ENCODE measurements at regions of chr11 and their contacts with region 1.

Region 1: DNA sequence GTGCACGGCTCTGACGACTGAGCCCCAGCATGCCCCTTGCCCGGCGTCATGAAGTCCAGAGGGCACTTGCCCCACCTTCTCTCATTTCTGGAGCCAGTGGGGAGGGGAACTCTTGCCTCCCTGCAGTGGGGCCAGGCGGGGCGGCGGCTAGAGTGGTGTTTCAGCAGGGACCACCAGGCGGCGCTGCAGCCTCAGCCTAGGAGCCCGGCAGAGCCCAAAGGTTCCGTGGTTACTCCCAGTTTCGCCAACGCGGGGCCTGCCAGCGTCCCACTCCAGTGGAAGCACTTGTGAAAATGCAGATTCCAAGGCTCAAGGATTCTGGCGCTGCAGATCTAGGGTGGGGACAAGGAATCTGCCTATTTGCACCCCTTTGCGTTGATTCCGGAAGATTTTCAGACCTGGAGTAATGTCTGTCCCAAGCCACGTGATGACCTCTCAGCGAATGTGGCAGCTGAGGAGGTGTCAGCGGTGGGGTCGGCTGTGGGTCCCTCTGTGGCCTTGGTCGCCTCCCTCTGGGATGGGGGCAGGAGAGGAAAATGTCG is 55.7 kb downstream of the CD82 start:
- DNase-seq: peak; percentile 94

Region 2: DNA sequence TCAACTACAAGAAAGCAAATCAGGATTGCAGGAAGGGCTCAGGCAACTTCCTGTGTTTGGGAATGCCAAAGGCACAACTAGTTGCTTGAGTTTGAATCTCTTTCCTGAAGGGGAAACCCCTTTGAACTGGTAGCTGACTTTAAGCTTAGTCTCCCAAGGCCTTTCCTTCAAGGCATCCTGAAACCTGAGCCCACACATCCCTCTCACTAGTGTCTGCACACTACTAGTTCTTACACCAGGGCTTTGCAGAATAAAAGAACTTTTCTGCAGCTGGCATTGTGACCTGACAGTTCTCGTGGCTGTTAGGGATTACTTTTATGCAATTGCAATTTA is 430.4 kb before region 1 on chr11:
- intact Hi-C with region 1: no loop called
- DNase-seq: no peak

Region 3: DNA sequence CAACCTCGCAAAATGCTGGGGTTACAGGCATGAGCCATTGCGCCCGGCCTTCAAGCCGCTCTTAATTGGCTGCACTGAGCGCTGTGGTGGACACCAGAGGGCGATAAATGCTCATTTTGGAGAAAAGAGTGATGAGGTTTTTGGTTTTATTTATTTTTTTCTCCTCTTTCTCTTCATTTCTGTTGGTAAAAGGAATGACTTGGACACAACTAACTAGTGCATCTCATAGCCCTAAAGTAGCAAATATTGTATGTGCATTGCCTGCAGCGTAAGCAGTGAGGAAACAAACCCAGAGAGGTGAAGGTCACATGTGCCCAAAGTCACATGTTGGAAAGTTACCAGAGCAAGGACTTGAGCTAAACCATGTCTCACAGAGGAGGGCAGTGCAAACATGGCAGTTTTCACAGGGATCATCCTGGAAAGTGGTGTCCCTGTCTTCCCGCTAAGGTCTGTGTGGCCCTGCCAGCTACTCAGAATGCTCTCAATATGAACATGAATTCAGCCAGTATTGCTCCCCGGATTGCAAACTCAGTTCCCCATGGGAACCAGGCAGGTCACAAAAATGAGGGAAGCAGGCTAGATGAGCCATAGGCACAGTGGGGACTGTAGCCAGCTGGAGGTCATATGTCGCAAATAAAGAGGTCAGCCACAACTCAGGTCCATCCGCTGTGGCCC is 64.3 kb before region 1 on chr11:
- intact Hi-C with region 1: loop called (anchors 2 kb)
- DNase-seq: no peak

Region 4: DNA sequence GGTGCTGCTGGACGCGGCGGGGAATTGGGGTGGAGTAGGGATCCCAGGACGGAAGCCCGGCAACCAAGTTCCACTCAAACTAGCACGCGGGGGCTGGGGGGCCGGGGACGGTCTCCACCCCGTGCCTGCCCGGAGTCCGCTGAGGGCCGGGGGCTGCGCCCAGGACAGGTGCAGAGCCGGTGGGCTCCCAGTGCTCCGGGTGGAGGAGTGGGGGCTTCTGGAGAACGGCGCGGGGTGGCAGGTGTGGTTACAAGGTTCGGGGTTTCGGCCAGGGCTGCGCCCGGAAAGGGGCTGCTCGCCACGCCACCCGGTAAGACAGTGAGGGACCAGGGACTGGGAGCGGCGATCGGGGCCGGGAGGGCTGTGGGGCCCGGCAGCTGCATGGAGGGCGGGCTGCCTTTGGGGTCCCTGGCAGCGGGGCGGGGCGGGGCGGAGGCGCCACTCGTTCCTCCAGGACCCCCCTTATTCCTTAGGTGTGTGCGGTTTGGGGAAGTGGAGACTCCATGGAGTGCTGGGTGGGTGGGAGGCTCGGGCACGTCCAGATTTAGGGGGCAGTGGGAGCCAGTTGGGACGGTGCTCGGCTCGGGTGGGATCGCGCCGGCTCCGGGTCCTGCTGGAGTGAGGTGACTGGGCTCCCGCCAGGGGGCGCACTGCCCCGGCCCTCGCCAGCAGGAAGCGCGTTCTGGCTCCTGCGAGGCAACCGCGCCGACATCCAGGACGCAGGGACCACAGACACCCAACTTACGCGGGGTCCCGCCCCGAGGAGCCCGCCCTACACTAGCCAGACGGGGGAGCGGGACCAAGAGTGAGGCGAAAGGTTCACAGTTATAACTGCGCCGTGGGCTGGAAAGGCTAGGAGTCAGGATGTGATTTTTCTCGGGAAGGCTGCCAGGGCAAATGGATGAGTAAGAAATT is 106.4 kb after region 1 on chr11:
- intact Hi-C with region 1: loop called (anchors 5 to 10 kb)
- DNase-seq: peak; percentile 93

Region 5: GRCh38 chr11:44893846-44894617 is 272.8 kb after region 1 on chr11:
- intact Hi-C with region 1: loop called in 1 of 2 experiments (anchors 2 kb)
- DNase-seq: peak; percentile 90

Region 6: DNA sequence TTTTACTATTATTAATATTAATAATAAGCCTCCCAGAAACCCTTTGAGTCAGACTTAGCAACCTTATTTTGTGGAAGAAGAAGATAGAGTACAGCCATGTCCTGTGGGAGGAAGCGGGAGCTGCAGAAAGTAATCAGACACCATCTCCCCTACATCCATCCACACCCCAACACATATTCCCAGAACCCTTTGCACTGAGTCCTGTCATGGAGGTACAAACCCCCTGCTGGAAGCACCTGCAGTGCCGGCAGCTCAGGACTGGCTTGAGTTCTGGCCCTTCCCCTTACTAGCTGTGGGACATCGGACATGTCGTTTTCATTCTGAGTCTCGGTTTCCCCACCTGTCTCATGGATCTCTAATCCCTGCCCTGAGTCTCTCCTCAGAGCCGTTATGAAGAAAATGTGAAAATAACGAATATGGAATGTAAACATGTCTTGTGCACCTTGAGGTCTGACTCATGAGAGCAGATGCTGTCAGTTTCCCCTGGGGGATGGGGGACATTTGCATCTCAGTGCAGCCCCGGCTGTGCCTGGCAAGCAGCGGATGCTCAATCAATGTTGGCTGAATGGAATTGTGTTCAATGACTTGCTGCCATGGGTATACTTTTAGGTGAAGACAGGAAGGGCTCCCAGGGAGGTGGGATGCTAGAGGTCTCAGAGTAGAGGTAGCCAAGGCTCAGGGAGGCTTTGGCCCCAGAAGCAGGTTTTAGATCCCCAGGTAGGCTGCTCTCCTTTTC is 284.1 kb after region 1 on chr11:
- intact Hi-C with region 1: loop called (anchors 2 to 5 kb)
- DNase-seq: no peak

Region 7: DNA sequence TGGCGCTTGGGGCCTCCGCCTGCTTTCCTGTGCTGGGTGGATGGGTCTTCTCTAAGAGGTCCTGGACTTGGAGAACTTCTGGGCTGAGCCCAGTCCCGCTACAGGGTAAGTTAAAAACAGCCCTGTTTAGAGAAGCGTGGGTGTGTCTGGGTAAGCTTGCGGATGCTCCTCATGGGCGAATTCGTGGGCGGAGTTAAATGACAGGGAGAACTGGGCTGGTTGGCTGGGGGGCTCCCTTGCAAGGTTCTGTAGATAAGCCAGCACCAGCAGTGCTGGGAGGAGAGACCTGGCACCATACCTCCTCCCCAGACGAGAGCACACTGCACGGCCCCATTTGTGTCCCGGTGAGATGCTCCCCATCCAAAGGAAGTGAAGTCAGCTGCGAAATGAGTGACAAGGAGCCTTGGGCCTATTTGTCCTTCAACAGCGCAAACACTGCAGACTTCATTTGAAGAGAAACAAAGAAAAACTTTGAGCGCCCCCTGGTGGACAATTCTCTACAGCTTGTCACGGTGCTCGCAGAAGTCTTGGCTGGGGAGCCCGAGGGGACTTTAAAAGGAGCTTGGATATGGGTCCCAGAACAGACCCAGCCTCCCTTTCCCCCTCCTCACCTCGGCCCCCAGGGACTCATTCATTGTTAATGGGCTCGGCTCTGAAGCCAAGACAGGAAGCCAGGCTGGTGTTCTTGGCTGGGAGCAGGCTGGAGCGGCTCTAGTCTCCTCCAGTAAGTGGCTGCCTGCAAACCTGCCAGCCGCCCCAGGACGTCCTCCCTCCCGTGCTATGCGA is 290.0 kb after region 1 on chr11:
- intact Hi-C with region 1: loop called (anchors 2 to 5 kb)
- DNase-seq: peak; percentile 88